Activated CD4-positive, alpha-beta memory T cell treated with anti-CD3 and anti-CD28 coated beads for 36 hours (primary cell): ENCODE measurements at regions of chr20 and their contacts with region 1.

Region 1: DNA sequence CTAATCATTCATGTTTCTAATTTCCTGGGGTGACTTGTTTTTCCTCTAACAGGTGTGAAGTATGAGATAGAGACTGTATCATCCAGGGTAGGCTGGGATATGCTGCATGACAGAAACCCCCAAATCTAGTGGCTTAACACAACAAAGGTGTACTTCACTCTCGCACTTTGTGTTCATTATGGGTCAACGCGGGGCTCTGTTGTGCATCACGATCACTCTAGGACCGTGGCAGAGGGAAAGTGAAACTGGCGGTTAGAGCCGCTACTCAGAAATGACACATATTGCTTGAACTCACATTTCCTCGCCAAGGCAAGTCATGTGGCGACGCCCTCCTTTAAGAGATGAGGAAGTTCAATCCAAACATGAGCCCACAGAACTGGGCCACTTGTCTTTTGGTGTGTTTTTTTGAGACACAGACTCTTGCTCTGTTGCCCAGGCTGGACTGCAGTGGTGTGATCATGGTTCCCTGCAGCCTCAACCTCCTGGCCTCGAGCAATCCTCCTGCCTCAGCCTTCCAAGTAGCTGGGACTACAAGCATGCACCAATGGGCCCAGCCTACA is 41.3 kb downstream of the PCNA start:
- DNase-seq: peak; percentile 92
- H3K4me3 Mint-ChIP-seq: peak overlapping the region; percentile 60
- H3K27ac Mint-ChIP-seq: peak overlapping the region; percentile 90
- H3K4me1 Mint-ChIP-seq: peaks cover 37% of the 10 kb centered on the region
- H3K27me3 Mint-ChIP-seq: no peaks in the 10 kb centered on the region

Region 2: DNA sequence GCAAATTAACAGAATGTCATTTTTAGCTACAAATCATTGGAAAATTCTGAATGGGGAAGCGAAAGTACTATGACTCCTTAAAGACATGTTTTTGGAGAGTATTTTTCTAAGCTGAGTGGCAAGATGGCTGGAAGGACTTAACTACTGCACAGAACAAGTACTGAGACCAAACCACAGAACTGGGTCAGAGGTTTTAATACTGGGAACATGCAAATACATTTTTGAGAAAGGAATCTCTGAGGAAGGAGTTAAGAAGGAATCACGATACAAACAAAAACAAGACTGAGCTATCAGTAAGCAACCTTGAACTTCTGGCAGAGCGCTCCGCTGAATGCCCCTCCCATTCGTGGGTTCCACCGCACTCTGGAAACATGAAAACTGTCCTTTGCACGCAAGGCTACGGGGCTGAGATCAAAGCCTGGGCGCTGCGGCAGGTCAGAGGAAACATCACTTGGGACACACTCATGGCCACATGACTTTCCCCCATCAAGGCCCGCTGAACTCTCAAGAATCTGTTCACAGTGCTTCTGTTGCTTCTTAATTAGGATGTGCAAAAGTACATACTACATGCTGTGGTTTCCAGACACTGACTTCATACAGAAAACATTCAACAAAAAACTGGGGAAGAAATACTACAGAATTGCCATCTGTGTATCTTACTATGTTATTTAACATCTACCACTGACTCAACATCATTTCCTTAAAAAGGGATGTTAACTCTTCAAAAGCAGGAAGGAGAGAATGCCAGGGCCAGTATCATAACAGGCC is 105.0 kb before region 1 on chr20:
- CTCF ChIA-PET with region 1: no interaction called
- POLR2A ChIA-PET with region 1: no interaction called
- intact Hi-C with region 1: loop called (anchors 5 kb)
- DNase-seq: peak; percentile 68
- H3K4me3 Mint-ChIP-seq: peak overlapping the region; percentile 54
- H3K27ac Mint-ChIP-seq: peak overlapping the region; percentile 63
- H3K4me1 Mint-ChIP-seq: peaks cover 18% of the 10 kb centered on the region
- H3K27me3 Mint-ChIP-seq: no peaks in the 10 kb centered on the region

Region 3: GRCh38 chr20:5001174-5002076 is 77.1 kb before region 1 on chr20 and contains the start of gene SLC23A2:
- CTCF ChIA-PET with region 1: no interaction called
- POLR2A ChIA-PET with region 1: no interaction called
- intact Hi-C with region 1: loop called (anchors 2 kb)
- DNase-seq: peak; percentile 65
- H3K4me3 Mint-ChIP-seq: peak within 1 kb of the TSS; percentile 90
- H3K27ac Mint-ChIP-seq: peak within 1 kb of the TSS; percentile 69
- H3K4me1 Mint-ChIP-seq: peaks cover 33% of the 10 kb centered on the region
- H3K27me3 Mint-ChIP-seq: no peaks in the 10 kb centered on the region
- total RNA-seq, gene SLC23A2: 14.0 to 14.9 TPM

Region 4: DNA sequence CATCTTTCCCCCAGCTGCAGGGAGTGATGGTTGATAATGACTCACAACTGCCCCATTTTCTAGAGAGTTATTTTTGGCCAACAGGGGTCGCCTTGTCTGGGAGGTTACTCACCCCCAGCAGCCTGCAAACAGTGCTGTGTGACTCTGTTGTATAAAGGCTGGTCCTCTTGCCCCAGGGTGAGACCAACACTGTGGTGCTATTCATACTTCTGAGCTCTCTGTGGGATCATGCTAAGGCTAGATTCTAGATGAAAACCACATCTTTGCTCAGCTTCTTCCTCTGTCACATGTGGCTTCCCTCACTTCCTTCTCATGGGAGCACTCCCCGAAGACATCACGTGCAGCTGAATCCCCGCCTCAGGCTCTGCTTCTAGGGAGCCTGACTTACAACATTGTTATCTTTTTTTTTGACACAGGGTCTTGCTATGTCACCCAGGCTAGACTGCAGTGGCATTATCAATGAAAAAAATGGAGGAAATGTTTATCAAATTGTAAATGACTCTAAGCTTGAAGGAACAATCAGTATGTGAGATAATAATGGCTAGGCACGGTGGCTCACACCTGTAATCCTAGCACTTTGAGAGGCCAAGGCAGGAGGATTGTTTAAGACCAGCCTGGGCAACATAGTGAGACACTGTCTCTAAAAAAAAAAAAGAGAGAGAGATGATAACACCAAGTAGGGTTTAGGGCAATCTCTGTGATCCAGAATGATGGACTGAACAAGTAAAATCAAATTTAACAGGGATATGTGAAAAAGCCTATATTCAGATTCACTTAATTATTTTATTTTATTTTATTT is 21.5 kb before region 1 on chr20:
- CTCF ChIA-PET with region 1: interaction called, 20 read pairs
- POLR2A ChIA-PET with region 1: interaction called, 4 read pairs
- intact Hi-C with region 1: loop called (anchors 1 kb)
- DNase-seq: peak; percentile 82
- H3K4me3 Mint-ChIP-seq: no peak overlapping the region
- H3K27ac Mint-ChIP-seq: peak overlapping the region; percentile 51
- H3K4me1 Mint-ChIP-seq: peaks cover 12% of the 10 kb centered on the region
- H3K27me3 Mint-ChIP-seq: no peaks in the 10 kb centered on the region

Region 5: DNA sequence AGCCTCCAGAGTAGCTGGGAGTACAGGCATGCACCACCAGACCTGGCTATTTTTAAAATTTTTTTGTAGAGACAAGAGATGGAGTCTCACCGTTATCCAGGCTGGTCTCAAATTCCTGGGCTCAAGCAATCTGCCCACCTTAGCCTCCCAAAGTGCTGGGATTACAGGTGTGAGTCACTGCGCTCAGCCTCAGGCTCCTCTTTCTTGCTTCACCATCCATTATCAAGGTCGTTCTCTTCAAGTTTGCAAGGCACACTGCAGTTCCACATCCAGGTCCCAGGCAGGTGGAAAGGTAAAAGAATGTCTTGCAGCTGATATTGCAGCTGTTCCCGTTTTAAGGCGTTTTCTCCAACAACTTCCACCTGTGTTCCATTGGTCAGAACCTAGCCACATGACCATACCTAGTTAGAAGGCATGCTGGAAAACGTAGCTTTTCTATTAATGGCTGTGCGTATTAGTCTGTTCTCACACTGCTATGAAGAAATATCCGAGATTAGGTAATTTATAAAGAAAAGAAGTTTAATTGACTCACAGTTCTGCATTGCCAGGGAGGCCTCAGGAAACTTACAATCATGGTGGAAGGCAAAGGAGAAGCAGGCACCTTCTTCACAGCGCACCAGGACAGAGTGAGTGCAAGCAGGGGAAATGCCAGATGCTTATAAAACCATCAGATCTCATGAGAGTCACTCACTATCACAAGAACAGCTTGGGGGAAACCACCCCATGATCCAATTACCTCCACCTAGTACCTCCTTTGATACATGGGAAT is 10.4 kb before region 1 on chr20:
- CTCF ChIA-PET with region 1: no interaction called
- POLR2A ChIA-PET with region 1: no interaction called
- intact Hi-C with region 1: no loop called
- DNase-seq: no peak
- H3K4me3 Mint-ChIP-seq: no peak overlapping the region
- H3K27ac Mint-ChIP-seq: no peak overlapping the region
- H3K4me1 Mint-ChIP-seq: no peaks in the 10 kb centered on the region
- H3K27me3 Mint-ChIP-seq: no peaks in the 10 kb centered on the region

Region 6: GRCh38 chr20:5119435-5120188 is 41.1 kb after region 1 on chr20 and contains the start of gene PCNA:
- CTCF ChIA-PET with region 1: no interaction called
- POLR2A ChIA-PET with region 1: no interaction called
- intact Hi-C with region 1: loop called (anchors 2 kb)
- DNase-seq: peak; percentile 99
- H3K4me3 Mint-ChIP-seq: peak within 1 kb of the TSS; percentile 90
- H3K27ac Mint-ChIP-seq: peak within 1 kb of the TSS; percentile 95
- H3K4me1 Mint-ChIP-seq: peaks cover 47% of the 10 kb centered on the region
- H3K27me3 Mint-ChIP-seq: no peaks in the 10 kb centered on the region
- total RNA-seq, gene PCNA: 554 to 560 TPM

Region 7: DNA sequence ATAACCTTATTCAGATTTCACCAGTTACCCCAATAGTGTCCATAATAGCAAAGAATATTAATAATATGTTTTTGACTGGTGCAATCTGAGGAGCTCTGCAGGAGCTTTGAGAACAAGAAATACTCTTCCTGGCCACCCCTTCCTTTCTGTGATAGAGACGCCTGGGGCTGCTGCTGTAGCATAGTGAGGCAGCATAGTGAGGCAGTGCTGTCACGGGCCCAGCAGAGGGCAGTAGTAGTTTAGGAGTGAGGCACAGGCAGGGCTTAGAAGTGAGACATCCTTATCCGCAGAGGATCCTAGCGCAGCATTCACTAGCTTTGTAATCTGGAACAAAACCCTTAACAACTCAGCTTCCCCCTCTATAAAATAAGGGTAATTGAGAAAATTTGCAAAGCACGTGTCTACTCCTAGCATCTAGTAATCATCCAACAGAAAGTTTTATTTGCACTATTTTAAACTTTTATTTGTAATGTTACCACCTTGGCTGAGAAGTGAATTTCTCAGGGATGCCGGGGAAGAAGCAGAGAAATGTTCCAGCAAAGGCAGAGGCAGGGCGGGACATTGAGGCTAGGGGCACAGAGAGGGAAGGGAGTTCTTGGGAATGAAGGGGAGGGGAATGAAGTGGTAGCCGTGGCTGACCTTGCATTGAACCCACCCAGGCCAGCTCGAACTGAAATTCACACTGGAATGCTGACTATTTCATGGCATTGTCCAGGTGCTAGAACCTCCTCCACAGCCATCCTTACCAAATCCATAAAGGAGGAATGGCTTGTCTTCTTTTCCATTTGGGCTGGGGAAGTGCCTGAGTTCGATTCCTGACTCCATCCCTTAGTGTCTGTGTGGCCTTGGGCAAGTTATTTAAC is 127.1 kb after region 1 on chr20:
- CTCF ChIA-PET with region 1: no interaction called
- POLR2A ChIA-PET with region 1: no interaction called
- intact Hi-C with region 1: no loop called
- DNase-seq: peak; percentile 79
- H3K4me3 Mint-ChIP-seq: no peak overlapping the region
- H3K27ac Mint-ChIP-seq: no peak overlapping the region
- H3K4me1 Mint-ChIP-seq: peaks cover 2% of the 10 kb centered on the region
- H3K27me3 Mint-ChIP-seq: no peaks in the 10 kb centered on the region